Activated CD4-positive, alpha-beta T cell treated with anti-CD3 and anti-CD28 coated beads for 36 hours (primary cell): ENCODE measurements at regions of chr18 and their contacts with region 1.

Region 1: DNA sequence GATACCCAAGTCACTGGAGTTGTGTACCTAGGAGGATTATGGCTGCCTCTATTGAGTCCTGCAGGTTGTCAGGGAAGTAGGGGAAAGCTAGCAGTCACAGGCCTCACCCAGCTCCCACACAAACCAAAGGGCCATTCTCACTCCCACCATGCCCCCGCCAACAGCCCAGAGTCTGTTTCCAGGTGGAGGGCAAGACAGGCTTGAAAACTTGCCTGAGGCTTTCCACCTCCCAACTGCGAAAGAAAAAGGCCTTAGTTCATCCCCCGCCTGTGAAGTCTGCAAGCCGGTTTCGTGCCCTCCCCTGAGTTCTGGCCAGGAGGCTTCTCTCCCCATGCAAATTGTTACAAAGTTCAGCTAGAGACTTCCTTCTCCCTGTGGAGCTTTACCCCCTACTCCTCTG is 270.3 kb downstream of the TXNL1 start:
- DNase-seq: no peak
- ATAC-seq: no peak
- H3K4me3 Mint-ChIP-seq: no peak overlapping the region
- H3K27ac Mint-ChIP-seq: no peak overlapping the region
- H3K4me1 Mint-ChIP-seq: no peaks in the 10 kb centered on the region
- H3K27me3 Mint-ChIP-seq: peaks cover 2% of the 10 kb centered on the region

Region 2: DNA sequence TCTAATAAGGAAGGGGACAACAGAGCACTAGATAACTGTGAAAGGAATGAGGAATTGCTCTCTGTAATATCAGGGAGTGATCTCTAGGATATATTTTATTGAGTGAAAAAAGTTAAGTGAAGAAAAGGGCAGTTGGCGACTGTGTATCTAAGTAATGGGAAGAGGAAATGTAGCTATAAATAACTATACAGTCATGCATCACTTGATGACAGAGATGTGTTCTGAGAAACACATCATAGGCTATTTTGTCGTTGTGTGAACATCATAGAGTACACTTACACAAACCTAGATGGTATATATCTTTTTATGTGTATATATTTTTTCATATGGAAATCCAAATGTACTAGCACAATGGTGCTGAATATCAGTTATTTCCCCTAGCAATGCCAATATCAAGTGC is 59.0 kb before region 1 on chr18:
- CTCF ChIA-PET with region 1: no interaction called
- POLR2A ChIA-PET with region 1: no interaction called
- intact Hi-C with region 1: loop called in 1 of 2 experiments (anchors 10 kb)
- DNase-seq: no peak
- ATAC-seq: no peak
- H3K4me3 Mint-ChIP-seq: no peak overlapping the region
- H3K27ac Mint-ChIP-seq: no peak overlapping the region
- H3K4me1 Mint-ChIP-seq: no peaks in the 10 kb centered on the region
- H3K27me3 Mint-ChIP-seq: no peaks in the 10 kb centered on the region